Caco-2 (cell line): ENCODE measurements at regions of chr1 and their contacts with region 1.

Region 1: GRCh38 chr1:100351095-100351891 is 1.0 kb upstream of the CDC14A start:
- DNase-seq: peak; percentile 89 to 91
- H3K4me3 ChIP-seq: peak overlapping the region; percentile 86
- H3K4me3 Mint-ChIP-seq: peak overlapping the region; percentile 95
- H3K27ac Mint-ChIP-seq: peak overlapping the region; percentile 94
- H3K4me1 ChIP-seq: peaks cover 15% of the 10 kb centered on the region
- H3K4me1 Mint-ChIP-seq: peaks cover 28% of the 10 kb centered on the region
- H3K27me3 ChIP-seq: no peaks in the 10 kb centered on the region
- H3K27me3 Mint-ChIP-seq: no peaks in the 10 kb centered on the region
- CTCF ChIP-seq: peak; percentile 23 to 48

Region 2: GRCh38 chr1:100037927-100038659 is 313.2 kb before region 1 on chr1:
- CTCF ChIA-PET with region 1: no interaction called
- POLR2A ChIA-PET with region 1: no interaction called
- intact Hi-C with region 1: loop called (anchors 1 kb)
- DNase-seq: peak; percentile 79 to 88
- H3K4me3 ChIP-seq: peak overlapping the region; percentile 60
- H3K4me3 Mint-ChIP-seq: peak overlapping the region; percentile 99
- H3K27ac Mint-ChIP-seq: peak overlapping the region; percentile 99
- H3K4me1 ChIP-seq: 0 out of 2 replicates have a peak, but pooled peaks cover 5% of the 10 kb centered on the region
- H3K4me1 Mint-ChIP-seq: no peaks in the 10 kb centered on the region
- H3K27me3 ChIP-seq: no peaks in the 10 kb centered on the region
- H3K27me3 Mint-ChIP-seq: no peaks in the 10 kb centered on the region
- CTCF ChIP-seq: no peak

Region 3: DNA sequence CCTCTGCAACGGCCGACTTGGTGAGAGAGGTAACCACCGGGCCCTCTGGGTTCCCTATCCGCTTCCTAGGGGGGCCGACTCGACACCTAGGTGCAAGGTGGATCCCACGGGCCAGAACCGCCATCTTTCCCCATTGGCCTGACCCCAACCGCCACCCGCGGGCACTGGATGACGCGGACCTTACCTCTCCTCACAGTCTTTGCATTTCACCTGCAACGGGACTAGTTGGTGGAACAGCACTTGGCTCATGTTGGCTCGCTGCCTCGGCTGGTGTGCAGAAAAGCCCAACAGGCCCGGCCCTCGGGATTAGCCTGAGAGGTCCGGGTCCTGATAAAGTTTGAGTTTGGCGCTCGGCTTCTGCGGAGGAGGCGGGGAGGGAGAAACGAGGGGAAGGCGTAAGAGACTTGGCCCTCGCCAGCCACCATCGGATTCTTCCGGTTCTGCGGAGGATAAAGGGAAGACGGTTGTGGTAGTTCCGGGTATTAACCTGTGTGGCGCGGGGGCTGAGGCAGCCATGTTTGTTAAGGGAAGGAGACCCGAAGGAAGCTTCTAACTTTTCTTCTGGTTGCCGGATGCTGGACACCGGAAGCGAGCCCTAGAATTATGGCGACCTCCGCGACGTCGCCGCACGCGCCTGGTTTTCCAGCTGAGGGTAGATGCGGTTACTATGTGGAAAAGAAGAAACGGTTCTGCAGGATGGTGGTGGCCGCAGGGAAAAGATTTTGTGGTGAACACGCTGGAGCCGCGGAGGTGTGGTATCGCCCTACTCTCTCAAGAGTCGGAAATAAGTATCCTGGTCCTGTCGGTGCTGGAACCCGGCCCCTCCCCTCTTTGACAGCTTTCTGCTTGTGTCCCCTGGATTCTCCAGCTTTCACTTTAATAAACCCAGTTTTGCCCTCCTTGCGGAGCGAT is 218.5 kb before region 1 on chr1 and contains the starts of genes SASS6 and TRMT13:
- CTCF ChIA-PET with region 1: no interaction called
- POLR2A ChIA-PET with region 1: no interaction called
- intact Hi-C with region 1: loop called (anchors 5 kb)
- DNase-seq: peak; percentile 91 to 95
- H3K4me3 ChIP-seq: peak within 1 kb of the TSS; percentile 50
- H3K4me3 Mint-ChIP-seq: peak within 1 kb of the TSS; percentile 98
- H3K27ac Mint-ChIP-seq: peak within 1 kb of the TSS; percentile 99
- H3K4me1 ChIP-seq: no peaks in the 10 kb centered on the region
- H3K4me1 Mint-ChIP-seq: no peaks in the 10 kb centered on the region
- H3K27me3 ChIP-seq: no peaks in the 10 kb centered on the region
- H3K27me3 Mint-ChIP-seq: no peaks in the 10 kb centered on the region
- CTCF ChIP-seq: no peak
- total RNA-seq, gene SASS6: 9.5 and 10.1 TPM in 2 replicates
- total RNA-seq, gene TRMT13: 12.6 and 14.5 TPM in 2 replicates

Region 4: DNA sequence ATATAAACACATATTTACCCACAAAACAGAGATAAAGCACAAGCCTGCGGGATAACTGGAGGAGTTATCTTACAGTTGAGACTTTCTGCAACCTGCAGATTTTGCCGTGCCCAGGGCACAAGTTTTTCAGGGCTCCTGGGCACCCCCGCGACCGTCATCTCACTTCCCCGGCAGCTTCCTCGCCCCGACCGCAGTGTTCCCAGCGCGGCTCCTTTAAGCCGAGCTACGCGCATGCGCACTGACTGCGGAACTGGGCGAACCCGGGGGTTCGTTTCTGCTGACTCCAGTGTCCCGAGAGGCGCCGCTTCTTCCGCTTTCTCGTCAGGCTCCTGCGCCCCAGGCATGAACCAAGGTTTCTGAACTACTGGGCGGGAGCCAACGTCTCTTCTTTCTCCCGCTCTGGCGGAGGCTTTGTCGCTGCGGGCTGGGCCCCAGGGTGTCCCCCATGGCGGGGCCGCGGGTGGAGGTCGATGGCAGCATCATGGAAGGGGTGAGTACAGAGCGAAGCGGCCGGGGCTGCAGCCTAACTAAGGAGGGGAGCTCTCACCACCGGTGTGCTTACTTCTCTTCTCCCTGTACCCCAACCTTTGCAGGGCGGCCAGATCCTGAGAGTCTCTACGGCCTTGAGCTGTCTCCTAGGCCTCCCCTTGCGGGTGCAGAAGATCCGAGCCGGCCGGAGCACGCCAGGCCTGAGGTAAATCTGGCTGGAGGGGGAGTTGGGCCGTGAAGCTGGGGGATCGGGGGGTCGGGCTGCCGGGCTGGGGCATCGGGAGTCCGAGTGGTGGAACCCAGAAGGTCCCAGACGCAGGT is 85.2 kb before region 1 on chr1 and contains the start of gene RTCA:
- CTCF ChIA-PET with region 1: interaction called, 5 read pairs
- POLR2A ChIA-PET with region 1: interaction called, 4 read pairs
- intact Hi-C with region 1: loop called (anchors 1 kb)
- DNase-seq: peak; percentile 88 to 89
- H3K4me3 ChIP-seq: peak within 1 kb of the TSS; percentile 79
- H3K4me3 Mint-ChIP-seq: peak within 1 kb of the TSS; percentile 95
- H3K27ac Mint-ChIP-seq: peak within 1 kb of the TSS; percentile 96
- H3K4me1 ChIP-seq: peaks cover 4% of the 10 kb centered on the region
- H3K4me1 Mint-ChIP-seq: no peaks in the 10 kb centered on the region
- H3K27me3 ChIP-seq: no peaks in the 10 kb centered on the region
- H3K27me3 Mint-ChIP-seq: no peaks in the 10 kb centered on the region
- CTCF ChIP-seq: no peak
- total RNA-seq, gene RTCA: 27.4 and 31.4 TPM in 2 replicates

Region 5: GRCh38 chr1:100299521-100300222 is 51.6 kb before region 1 on chr1:
- CTCF ChIA-PET with region 1: no interaction called
- POLR2A ChIA-PET with region 1: no interaction called
- intact Hi-C with region 1: loop called (anchors 5 kb)
- DNase-seq: no peak
- H3K4me3 ChIP-seq: no peak overlapping the region
- H3K4me3 Mint-ChIP-seq: no peak overlapping the region
- H3K27ac Mint-ChIP-seq: no peak overlapping the region
- H3K4me1 ChIP-seq: no peaks in the 10 kb centered on the region
- H3K4me1 Mint-ChIP-seq: no peaks in the 10 kb centered on the region
- H3K27me3 ChIP-seq: no peaks in the 10 kb centered on the region
- H3K27me3 Mint-ChIP-seq: no peaks in the 10 kb centered on the region
- CTCF ChIP-seq: no peak

Region 6: DNA sequence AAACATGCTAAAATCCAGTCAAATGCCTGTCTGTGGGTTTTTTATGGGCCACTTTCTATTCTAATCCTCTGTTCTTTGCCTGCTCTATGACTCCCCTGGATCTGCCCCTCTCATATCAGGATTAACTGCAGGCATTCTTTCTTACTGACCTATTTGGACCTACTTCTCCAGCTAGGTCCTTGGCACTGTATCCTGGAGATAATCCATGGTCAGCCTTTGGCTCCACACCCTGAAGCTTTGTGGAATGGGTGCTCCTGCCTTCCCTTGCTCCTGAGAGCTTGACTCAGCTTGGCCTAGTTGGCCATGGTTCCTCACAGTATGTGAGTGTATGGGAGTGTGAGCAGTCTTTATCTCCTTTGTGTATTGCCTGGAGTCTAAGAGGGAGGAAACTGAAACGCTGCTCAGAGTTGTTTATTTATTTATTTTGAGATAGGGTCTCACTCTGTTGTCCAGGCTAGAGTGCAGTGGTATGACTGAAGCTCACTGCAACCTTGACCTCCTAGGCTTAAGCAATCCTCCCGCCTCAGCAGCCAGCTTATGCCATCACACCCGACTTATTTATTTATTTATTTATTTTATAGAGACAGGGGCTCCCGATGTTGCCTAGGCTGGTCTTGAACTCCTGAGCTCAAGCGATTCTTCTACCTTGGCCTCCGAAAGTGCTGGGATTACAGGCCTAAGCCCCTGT is 27.7 kb before region 1 on chr1:
- CTCF ChIA-PET with region 1: no interaction called
- POLR2A ChIA-PET with region 1: interaction called, 3 read pairs
- intact Hi-C with region 1: loop called (anchors 1 kb)
- DNase-seq: no peak
- H3K4me3 ChIP-seq: no peak overlapping the region
- H3K4me3 Mint-ChIP-seq: no peak overlapping the region
- H3K27ac Mint-ChIP-seq: no peak overlapping the region
- H3K4me1 ChIP-seq: peaks cover 35% of the 10 kb centered on the region
- H3K4me1 Mint-ChIP-seq: peaks cover 21% of the 10 kb centered on the region
- H3K27me3 ChIP-seq: no peaks in the 10 kb centered on the region
- H3K27me3 Mint-ChIP-seq: no peaks in the 10 kb centered on the region
- CTCF ChIP-seq: no peak